ENCODE measurements at regions of chr3 and their contacts with region 1.

Region 1: GRCh38 chr3:136632625-136633081 is 119.5 kb downstream of the STAG1 start:
- DNase-seq: peak; percentile 92
- ATAC-seq: peak; percentile 91
- H3K4me3 ChIP-seq: peak overlapping the region; percentile 48
- H3K27ac ChIP-seq: peak overlapping the region; percentile 89
- H3K4me1 ChIP-seq: peaks cover 25% of the 10 kb centered on the region
- H3K27me3 ChIP-seq: no peaks in the 10 kb centered on the region
- CTCF ChIP-seq: no peak

Region 2: DNA sequence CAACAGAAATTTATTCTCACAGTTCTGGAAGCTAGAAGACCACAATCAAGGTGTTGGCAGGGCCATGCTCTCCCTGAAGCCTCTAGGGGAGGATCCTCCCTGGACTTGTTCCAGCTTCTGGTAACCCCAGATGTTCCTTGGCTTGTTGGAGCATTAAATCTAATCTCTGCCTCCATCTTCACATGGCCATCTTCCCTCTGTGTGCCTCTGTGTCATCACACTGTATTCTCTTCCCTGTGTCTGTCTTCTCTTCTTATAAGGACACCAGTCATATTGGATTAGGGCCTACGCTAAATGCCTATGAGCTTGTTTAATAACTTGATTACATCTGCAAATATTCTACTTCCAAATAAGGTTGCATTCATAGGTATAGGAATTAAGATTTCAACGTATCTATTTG is 10.1 kb after region 1 on chr3:
- CTCF ChIA-PET with region 1: interaction called, 13 read pairs
- POLR2A ChIA-PET with region 1: no interaction called
- intact Hi-C with region 1: no loop called
- DNase-seq: no peak
- ATAC-seq: no peak
- H3K4me3 ChIP-seq: no peak overlapping the region
- H3K27ac ChIP-seq: no peak overlapping the region
- H3K4me1 ChIP-seq: no peaks in the 10 kb centered on the region
- H3K27me3 ChIP-seq: no peaks in the 10 kb centered on the region
- CTCF ChIP-seq: no peak

Region 3: DNA sequence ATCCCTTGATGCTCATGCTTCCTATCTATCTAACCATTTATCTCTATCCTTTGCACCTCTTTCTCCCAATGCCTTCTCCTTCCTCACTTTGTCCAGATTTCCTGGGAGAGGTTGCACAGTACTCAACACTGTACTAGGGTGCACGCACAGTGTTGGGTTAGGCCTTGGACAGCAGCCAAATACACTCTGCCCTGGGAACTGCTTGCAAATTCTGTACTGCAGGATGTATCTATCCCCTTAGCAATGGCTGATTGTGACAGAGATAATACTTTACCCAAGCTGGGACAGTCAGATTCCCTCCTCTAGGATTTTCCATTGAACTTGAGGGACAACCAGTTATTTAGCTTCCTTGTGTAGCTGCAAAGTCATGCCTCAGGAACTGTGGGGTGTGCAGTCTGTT is 438.5 kb after region 1 on chr3:
- CTCF ChIA-PET with region 1: no interaction called
- POLR2A ChIA-PET with region 1: no interaction called
- intact Hi-C with region 1: no loop called
- DNase-seq: no peak
- ATAC-seq: no peak
- H3K4me3 ChIP-seq: no peak overlapping the region
- H3K27ac ChIP-seq: no peak overlapping the region
- H3K4me1 ChIP-seq: no peaks in the 10 kb centered on the region
- H3K27me3 ChIP-seq: no peaks in the 10 kb centered on the region
- CTCF ChIP-seq: no peak

Measured in PC-3 (cell line).